Kidney (tissue), 22 donors: ENCODE measurements at regions of chr5 and their contacts with region 1.

Region 1: GRCh38 chr5:141691867-141692532 is 10.0 kb upstream of the ARAP3 start:
- DNase-seq: peak; percentile 89 to 94 (median 90)
- H3K4me3 ChIP-seq: peak overlapping the region; percentile 30 to 57 (median 42)
- H3K27ac ChIP-seq: no peak overlapping the region
- H3K4me1 ChIP-seq: peaks cover 0 to 5% (median 4%) of the 10 kb centered on the region in 3 donors
- H3K27me3 ChIP-seq: no peaks in the 10 kb centered on the region
- CTCF ChIP-seq: peak; percentile 100

Region 2: DNA sequence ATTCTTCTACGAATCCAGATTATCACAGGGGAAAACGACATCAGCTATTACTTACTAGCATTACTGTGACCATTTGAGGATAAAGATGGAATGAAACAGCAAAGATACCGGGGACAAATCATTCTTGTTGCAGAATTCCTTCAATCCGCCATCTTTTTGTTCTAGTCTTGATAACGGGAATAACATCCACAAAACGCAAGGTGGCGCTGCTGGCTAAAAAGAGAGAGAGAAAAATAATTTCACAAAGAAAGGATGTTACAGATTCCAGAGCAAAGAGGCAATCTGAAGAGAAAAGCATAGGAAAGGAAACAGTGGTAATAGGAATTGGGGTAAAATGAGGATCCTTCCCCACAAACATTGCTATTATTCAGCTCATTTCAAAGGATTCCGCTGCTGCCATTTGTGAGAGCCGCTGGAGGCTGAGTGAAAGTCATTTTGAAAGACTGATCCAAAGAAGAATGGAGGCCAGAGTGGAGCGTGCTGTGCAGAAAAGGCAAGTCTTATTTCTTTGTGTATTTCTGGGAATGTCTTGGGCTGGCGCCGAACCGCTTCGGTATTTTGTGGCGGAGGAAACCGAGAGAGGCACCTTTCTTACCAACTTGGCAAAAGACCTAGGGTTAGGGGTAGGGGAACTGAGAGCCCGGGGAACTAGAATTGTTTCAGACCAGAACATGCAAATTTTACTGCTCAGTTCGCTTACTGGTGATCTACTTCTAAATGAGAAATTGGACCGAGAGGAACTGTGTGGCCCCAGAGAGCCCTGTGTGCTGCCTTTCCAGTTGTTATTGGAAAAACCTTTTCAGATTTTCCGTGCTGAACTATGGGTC is 519.4 kb before region 1 on chr5 and contains the start of gene PCDHB7:
- intact Hi-C with region 1: no loop called
- DNase-seq: peak in 3 of 5 donors; percentile 22 to 82 (median 57)
- H3K4me3 ChIP-seq: peak within 1 kb of the TSS; percentile 40 to 55 (median 40)
- H3K27ac ChIP-seq: no peak within 1 kb of the TSS
- H3K4me1 ChIP-seq: no peaks in the 10 kb centered on the region
- H3K27me3 ChIP-seq: peaks cover 2% of the 10 kb centered on the region
- CTCF ChIP-seq: peak; percentile 34
- total RNA-seq, gene PCDHB7: 2.3 TPM

Region 3: DNA sequence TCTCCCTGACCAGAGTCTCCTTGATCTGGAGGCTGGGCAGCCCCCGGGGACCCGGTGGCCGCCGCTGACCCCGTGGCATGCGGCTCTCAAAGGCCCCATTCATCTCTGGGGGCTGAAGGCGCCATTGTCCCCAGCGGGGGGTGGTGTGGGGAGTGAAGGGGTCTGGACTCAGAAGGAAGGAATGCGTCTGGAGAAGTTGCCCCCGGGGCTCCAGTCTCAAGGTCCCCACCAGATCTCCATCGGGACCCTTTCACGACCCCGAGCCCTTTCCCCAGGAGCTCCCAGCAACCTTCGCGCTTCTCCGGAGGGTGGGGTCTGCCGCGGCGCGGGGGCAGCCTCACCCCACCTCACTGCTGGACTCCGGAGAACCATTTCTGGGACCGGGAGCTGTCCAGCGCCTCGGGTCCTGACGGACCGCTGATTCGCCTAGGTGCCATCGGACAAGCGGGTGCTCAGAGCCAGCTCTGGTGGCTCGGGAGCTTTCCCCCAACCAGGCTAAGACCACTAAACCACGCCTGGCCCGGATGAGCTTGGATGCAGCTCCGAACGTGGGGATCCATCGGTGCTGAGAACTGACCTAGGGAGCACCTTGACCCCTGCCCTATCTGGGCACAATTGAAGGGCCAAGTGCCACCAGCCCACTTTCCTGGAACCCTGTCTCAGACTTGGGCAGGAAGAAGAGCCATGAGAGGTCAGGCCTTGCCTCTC is 191.3 kb after region 1 on chr5:
- intact Hi-C with region 1: loop called (anchors 5 kb)
- DNase-seq: peak; percentile 70 to 89 (median 86)
- H3K4me3 ChIP-seq: no peak overlapping the region
- H3K27ac ChIP-seq: no peak overlapping the region
- H3K4me1 ChIP-seq: peaks cover 0 to 16% (median 0%) of the 10 kb centered on the region in 3 donors
- H3K27me3 ChIP-seq: peaks cover 19% of the 10 kb centered on the region
- CTCF ChIP-seq: no peak

Region 4: GRCh38 chr5:141951332-141951781 is 259.4 kb after region 1 on chr5:
- intact Hi-C with region 1: loop called (anchors 10 kb)
- DNase-seq: peak in 4 of 5 donors; percentile 36 to 84 (median 50)
- H3K4me3 ChIP-seq: no peak overlapping the region
- H3K27ac ChIP-seq: no peak overlapping the region
- H3K4me1 ChIP-seq: peaks cover 0 to 9% (median 0%) of the 10 kb centered on the region in 3 donors
- H3K27me3 ChIP-seq: no peaks in the 10 kb centered on the region
- CTCF ChIP-seq: no peak